ENCODE measurements at regions of chr19 and their contacts with region 1.

Region 1: DNA sequence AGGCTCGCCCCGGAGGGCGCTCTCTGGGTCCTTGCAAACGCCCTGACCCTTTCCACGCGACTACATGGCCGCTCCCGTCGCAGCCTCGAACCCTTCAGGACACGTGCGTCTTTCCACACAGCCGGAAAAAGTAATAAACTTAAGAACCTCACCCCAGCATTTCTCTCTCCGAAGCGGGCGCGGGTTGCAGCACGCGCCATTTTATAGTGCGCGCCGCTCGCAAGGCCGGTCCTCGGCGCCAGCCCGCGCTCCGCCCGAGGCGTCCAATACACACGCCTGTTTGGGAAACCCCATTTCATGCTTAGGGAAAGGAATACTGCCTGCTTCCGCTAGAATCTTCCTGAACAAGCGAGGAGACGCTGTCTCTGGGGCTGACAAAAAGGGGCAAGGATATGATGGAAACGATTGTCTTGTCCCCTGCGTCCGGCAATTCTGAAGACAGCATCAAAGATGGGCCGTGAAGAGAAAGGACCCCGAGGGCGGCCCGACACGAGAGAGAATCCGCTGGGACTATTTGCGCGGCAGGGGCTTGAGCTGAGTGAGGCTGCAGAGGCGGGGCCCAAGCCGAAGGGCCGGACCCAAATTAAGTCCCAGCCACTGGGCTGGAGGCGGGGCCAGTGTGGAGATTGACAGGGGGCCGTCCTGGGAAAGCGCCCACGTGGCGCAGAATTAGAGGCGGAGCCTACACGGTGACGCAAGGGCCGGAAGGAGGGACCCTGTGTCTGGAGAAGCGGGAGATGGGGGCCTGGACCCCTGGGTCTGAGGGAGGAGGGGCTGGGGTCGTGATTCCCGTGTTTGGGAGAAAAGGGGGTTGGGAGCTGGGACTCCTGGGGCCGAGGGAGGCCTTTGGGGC is 14.4 kb downstream of the ACP4 start:
- DNase-seq: peak; percentile 95 to 99 (median 98)
- H3K4me3 ChIP-seq: peak overlapping the region; percentile 75 to 100 (median 93)
- H3K27ac ChIP-seq: peak overlapping the region; percentile 93 to 100 (median 100)
- H3K27me3 ChIP-seq: no peaks in the 10 kb centered on the region
- CTCF ChIP-seq: peak in 16 of 56 donors; percentile 2 to 60 (median 24)

Region 2: DNA sequence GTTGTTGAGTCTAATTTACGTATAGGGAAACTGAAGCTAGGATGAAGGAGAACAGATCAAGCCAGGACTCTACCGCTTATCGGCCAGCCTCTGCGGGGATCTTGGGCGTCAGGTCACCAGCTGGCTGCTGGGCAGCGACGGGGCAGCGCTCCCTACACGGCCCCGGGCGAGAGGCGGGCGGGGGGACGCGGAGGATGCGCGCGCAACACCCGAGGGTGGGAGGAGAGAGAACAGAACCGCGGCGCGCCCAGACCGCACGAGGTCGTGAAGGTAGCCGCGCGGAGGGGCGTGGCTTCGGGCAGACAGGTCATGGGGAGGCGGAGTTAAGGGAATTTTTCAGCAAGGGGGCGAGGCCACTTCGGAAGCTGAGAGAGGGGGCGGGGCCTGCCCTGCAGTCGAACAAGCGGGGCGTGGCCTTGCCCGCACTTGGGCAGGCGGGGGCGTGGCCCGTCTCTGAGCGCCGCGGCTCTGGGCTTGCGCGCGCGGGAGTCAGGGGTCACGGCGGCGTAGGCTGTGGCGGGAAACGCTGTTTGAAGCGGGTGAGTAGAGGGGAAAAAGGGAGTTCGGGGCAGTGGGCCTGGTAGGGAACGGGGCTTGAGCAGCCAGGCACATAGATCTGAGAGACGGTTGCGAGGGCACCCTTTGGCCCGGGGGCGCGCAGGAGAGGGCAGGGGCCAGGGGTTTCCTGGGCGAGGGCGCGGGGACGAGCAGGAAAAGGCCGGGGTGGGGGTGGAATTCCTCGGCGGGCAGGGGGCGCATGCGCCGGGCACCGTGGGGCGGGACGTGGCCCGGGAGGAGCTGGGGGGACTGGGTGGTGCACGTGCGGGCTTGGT is 420.6 kb before region 1 on chr19 and contains the start of gene POLD1:
- intact Hi-C with region 1: loop called in 1 of 2 experiments (anchors 5 kb)
- DNase-seq: peak; percentile 85 to 97 (median 93)
- H3K4me3 ChIP-seq: peak within 1 kb of the TSS; percentile 50 to 88 (median 68)
- H3K27ac ChIP-seq: peak within 1 kb of the TSS; percentile 8 to 92 (median 83)
- H3K27me3 ChIP-seq: no peaks in the 10 kb centered on the region
- CTCF ChIP-seq: peak in 20 of 56 donors; percentile 9 to 52 (median 24)
- total RNA-seq, gene POLD1: 4.5 to 21.9 (median 12.2) TPM

Region 3: DNA sequence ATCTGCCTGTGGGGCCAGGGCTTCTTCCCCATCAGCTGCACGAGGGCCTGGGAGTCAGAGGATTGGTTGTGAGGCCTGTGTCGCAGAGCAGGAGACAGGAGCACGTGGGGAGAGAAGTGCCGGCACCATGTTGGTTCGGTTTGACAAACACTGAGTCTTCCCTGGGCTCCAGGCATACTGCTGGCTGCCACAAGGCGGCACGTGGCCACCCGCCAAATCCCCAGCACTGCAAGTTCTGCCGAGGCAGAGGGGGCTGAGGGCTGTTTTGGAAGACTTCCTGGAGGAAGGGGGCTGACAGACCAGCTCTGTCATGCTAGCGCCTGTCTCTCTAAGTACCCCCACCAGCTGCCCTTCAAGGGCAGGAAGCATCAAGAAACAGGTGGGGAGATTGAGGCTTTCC is 94.6 kb before region 1 on chr19:
- intact Hi-C with region 1: no loop called
- DNase-seq: peak in 3 of 10 donors; percentile 56 to 69 (median 67)
- H3K4me3 ChIP-seq: no peak overlapping the region
- H3K27ac ChIP-seq: peak overlapping the region in 5 of 59 donors; percentile 19 to 37 (median 22)
- H3K27me3 ChIP-seq: peaks cover 0 to 5% (median 0%) of the 10 kb centered on the region in 45 donors
- CTCF ChIP-seq: peak in 8 of 56 donors; percentile 10 to 38 (median 20)

Region 4: GRCh38 chr19:50724522-50725217 is 80.0 kb before region 1 on chr19:
- intact Hi-C with region 1: loop called in 1 of 2 experiments (anchors 5 kb)
- DNase-seq: peak; percentile 99 to 100 (median 99)
- H3K4me3 ChIP-seq: peak overlapping the region; percentile 60 to 93 (median 84)
- H3K27ac ChIP-seq: peak overlapping the region in 57 of 59 donors; percentile 41 to 90 (median 78)
- H3K27me3 ChIP-seq: no peaks in the 10 kb centered on the region
- CTCF ChIP-seq: peak; percentile 40 to 95 (median 72)

Region 5: GRCh38 chr19:50870417-50871089 is 65.9 kb after region 1 on chr19:
- intact Hi-C with region 1: no loop called
- DNase-seq: no peak
- H3K4me3 ChIP-seq: no peak overlapping the region
- H3K27ac ChIP-seq: no peak overlapping the region
- H3K27me3 ChIP-seq: peaks cover 0 to 78% (median 38%) of the 10 kb centered on the region in 45 donors
- CTCF ChIP-seq: no peak

Measured in dorsolateral prefrontal cortex (tissue), 120 donors.